Psoas muscle (tissue), 8 donors: ENCODE measurements at regions of chr11 and their contacts with region 1.

Region 1: DNA sequence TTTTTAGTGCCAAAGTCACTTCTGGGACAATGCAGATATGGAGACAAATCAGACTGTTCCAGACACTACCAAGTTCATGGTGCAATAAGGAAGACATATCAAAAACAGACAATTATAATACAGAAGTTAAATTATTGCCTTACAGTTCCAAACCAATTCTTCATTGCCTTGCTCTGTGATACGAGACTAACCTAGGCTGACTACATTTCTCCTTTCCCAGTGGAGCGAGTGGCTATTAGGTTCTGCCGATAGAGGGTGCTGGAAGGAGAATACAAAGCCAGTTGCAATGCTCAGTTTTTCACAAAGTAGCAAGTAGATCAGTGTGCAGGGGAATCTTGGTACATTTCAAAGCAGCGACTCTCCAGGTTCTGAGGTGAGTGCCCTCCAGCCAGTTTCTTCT is 67.8 kb downstream of the FAM168A start:
- DNase-seq: no peak
- ATAC-seq: peak in 2 of 4 donors; percentile 29 to 43
- H3K4me3 ChIP-seq: no peak overlapping the region
- H3K27ac ChIP-seq: no peak overlapping the region
- H3K4me1 ChIP-seq: peaks cover 29% of the 10 kb centered on the region
- H3K27me3 ChIP-seq: no peaks in the 10 kb centered on the region
- CTCF ChIP-seq: no peak

Region 2: GRCh38 chr11:73478738-73479347 is 51.3 kb before region 1 on chr11:
- intact Hi-C with region 1: loop called in 1 of 2 experiments (anchors 5 kb)
- DNase-seq: no peak
- ATAC-seq: peak in 3 of 4 donors; percentile 74 to 86 (median 84)
- H3K4me3 ChIP-seq: no peak overlapping the region
- H3K27ac ChIP-seq: no peak overlapping the region
- H3K4me1 ChIP-seq: peaks cover 18% of the 10 kb centered on the region
- H3K27me3 ChIP-seq: no peaks in the 10 kb centered on the region
- CTCF ChIP-seq: peak; percentile 52

Region 3: DNA sequence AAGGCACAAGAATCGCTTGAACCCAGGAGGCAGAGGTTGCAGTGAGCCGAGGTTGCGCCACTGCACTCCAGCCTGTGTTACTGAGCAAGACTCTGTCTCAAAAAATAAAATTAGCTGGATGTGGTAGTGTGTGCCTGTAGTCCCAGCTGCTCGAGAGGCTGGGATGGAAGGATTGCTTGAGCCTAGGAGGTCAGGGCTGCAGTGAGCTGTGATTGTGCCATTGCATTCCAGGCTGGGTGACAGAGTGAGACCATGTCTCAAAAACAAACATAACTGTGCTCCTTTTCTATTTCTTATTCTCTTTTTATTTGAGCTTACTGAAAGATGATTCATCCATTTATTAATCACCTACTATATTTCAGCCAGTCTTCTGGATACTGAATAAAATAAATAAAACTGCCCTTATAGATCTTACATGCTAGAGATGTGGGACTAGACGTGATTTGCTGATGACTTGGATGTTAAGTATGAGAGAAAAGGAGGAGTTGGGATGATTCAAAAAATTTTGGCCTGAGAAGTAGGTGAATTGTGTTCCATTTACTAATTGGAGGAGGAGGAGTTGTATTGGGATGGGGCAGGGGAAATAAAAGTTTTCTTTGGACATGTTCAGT is 364.7 kb after region 1 on chr11:
- intact Hi-C with region 1: no loop called
- DNase-seq: no peak
- ATAC-seq: no peak
- H3K4me3 ChIP-seq: no peak overlapping the region
- H3K27ac ChIP-seq: no peak overlapping the region
- H3K4me1 ChIP-seq: no peaks in the 10 kb centered on the region
- H3K27me3 ChIP-seq: no peaks in the 10 kb centered on the region
- CTCF ChIP-seq: no peak